Activated naive CD4-positive, alpha-beta T cell treated with anti-CD3 and anti-CD28 coated beads for 36 hours (primary cell): ENCODE measurements at regions of chr6 and their contacts with region 1.

Region 1: DNA sequence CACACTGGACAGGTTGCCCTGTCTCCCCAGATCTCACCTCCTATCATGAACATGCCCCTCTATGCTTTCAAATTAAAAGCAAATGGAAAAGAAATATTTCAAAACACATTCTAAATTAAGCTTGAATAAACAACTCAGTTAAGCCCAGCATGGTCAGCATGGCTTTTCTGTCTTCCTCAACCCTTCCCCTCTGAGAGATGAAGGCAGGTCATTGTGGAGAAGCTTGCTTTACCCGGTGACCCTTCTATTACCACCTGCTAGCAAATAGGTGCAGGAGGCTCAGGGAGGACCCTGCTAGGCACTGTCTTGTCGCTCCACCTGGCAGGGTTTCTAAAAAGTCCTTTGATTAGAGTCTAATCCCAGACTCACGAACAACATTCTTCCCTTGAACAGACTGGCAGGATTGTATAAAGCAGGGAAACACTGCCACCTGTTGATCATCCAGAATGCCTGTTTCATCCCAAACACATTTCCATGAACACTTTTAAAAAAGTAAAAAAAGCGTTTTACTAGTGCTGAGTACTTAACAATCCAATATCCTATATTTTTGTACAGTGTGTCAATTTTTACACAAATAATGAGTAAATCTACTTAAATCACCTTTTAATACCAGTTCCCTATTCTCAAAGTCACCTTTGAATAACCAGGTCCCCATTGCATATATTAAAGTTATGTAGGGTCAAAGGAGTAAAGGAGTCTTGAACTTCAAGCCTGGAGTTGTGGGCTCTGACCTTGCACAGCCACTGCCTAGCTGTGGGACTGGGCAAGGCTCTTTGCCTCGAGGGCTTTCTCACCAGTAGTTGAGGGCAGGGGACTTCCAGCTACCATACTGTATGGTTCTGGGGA is 75.5 kb downstream of the GPR6 start:
- DNase-seq: peak; percentile 27
- H3K4me3 Mint-ChIP-seq: no peak overlapping the region
- H3K27ac Mint-ChIP-seq: no peak overlapping the region
- H3K4me1 Mint-ChIP-seq: no peaks in the 10 kb centered on the region
- H3K27me3 Mint-ChIP-seq: peaks cover 5% of the 10 kb centered on the region

Region 2: DNA sequence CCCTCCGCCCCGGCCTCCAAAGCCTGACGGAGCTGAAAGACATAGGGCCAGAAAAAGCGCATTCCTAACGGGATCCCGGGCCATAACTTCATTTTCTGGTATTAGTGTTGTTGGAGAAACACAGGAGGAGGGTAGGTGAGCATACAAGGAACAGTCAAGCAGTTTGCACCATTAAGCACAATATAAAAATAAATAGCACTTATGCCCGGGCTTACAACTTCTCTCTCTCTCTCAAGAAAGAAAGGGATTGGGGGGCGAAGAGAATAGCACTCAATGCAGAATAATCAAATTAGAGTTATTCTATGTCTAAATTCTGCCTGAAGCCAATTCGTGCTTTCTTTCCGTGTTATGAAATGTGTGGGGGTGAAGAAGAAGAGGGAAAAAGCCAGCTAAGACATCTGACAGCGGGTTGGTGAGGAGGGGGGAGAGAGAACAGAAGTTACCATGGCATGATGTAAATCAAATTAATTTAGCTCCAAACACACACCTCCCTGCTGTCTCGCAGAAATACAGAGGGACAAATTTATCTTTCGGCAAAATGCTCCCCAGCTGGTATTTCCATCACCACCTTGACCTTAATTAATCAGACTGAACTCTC is 305.0 kb after region 1 on chr6:
- CTCF ChIA-PET with region 1: no interaction called
- intact Hi-C with region 1: no loop called
- DNase-seq: no peak
- H3K4me3 Mint-ChIP-seq: peak overlapping the region; percentile 36
- H3K27ac Mint-ChIP-seq: no peak overlapping the region
- H3K4me1 Mint-ChIP-seq: peaks cover 8% of the 10 kb centered on the region
- H3K27me3 Mint-ChIP-seq: peaks cover 33% of the 10 kb centered on the region

Region 3: DNA sequence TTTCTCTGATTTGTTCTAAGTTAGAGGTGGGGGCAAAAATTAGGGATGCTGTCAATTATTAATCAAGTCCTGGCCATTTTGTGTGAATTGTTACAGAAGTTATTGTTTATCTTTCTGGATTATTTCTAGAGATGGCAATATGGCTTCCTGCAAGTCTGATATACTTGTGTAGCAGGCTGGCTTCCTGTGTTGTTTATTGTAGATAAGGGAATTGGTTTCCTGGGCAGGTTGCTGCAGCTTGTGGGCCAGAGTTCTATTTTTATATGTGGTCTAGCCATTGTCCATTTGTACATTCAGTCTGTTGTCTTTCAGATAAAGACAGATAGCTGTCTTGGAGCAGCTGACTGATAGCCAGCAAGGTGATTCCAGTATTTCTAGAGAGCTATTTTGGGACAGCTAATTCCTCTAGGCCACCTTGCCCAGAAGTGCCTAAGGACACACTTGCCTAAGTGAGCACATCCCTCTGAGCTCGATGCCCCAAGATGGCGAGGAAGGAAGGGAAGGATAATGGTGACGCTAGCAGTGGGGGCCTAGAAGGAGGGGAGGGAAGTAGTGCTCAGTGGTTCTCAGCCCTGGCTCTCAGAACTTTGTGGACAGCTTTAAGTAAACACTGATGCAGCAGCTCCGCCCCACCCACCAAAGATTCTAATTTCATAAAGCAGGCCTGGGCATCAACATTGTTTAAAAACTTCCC is 336.2 kb after region 1 on chr6:
- CTCF ChIA-PET with region 1: interaction called, 3 read pairs
- intact Hi-C with region 1: loop called (anchors 1 kb)
- DNase-seq: no peak
- H3K4me3 Mint-ChIP-seq: no peak overlapping the region
- H3K27ac Mint-ChIP-seq: no peak overlapping the region
- H3K4me1 Mint-ChIP-seq: peaks cover 6% of the 10 kb centered on the region
- H3K27me3 Mint-ChIP-seq: no peaks in the 10 kb centered on the region